ENCODE measurements at regions of chr10 and their contacts with region 1.

Region 1: GRCh38 chr10:112140110-112140970 is 43.2 kb downstream of the GPAM start:
- DNase-seq: peak; percentile 75 to 96
- H3K4me3 ChIP-seq: no peak overlapping the region
- H3K27ac ChIP-seq: no peak overlapping the region
- H3K4me1 ChIP-seq: no peaks in the 10 kb centered on the region; a peak in 2 of 7 replicates
- H3K27me3 ChIP-seq: no peaks in the 10 kb centered on the region
- CTCF ChIP-seq: peak; percentile 86 to 99 (median 97)
- EP300 ChIP-seq: no peak
- POLR2A ChIP-seq: no peak
- RAD21 ChIP-seq: peak; percentile 85 to 90

Region 2: DNA sequence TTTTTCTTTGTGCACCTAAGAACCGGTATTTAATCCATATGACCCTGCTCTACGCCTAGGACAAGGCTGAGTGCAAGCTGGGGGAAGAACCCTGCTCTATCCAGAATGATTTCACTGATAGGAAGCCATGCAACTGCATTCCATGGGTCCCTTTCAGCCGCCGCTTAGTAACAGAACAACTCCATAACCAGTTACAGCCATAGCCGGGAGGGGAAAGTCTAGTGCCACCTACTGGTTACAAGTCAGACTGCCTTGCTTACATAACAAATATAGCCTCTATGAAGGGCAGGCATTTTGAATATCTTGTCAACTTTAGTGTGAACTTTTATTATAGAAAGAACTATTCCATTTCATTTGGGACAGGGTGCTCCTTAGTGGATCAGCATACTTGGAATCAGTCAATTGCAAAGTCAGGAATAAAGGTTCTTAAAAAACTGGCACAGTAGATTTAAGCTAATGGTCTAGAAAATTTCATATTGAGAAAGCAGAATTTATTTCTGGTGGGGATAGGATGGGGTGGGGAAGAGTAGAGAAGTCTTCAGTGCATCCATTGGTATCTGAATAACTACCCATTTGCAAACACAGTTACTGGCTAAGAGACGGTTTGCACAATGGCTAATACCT is 541.8 kb before region 1 on chr10:
- CTCF ChIA-PET with region 1: interaction called, 12 read pairs
- POLR2A ChIA-PET with region 1: no interaction called
- DNase-seq: peak; percentile 39 to 68
- H3K4me3 ChIP-seq: no peak overlapping the region
- H3K27ac ChIP-seq: no peak overlapping the region
- H3K4me1 ChIP-seq: peaks cover 0 to 3% (median 0%) of the 10 kb centered on the region in 4 experiments; a peak in 1 of 7 replicates
- H3K27me3 ChIP-seq: no peaks in the 10 kb centered on the region
- CTCF ChIP-seq: peak; percentile 23 to 90 (median 71)
- EP300 ChIP-seq: no peak
- POLR2A ChIP-seq: no peak
- RAD21 ChIP-seq: peak; percentile 72 to 87

Region 3: DNA sequence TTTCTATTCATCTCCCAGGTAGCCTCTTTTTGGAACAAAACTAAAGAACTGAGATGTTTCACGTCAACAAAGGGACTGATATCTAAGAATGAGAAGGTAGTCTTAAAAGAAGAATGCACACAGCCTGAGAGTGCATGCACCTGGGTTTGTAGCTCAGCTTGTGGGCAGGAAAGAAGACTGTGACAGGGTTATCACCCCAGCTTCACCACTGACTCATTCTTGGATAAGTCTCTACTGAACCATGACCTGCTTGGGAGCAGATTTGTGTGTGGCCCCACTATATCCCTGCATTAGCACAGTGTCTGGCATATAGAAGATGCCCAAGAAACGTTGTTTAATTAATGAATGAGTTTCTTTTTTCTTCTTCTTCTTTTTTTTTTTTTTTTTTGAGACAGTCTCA is 144.2 kb before region 1 on chr10:
- CTCF ChIA-PET with region 1: interaction called, 14 read pairs
- POLR2A ChIA-PET with region 1: no interaction called
- DNase-seq: no peak
- H3K4me3 ChIP-seq: no peak overlapping the region
- H3K27ac ChIP-seq: no peak overlapping the region
- H3K4me1 ChIP-seq: peaks cover 3 to 15% (median 14%) of the 10 kb centered on the region in 4 experiments; a peak in 5 of 7 replicates
- H3K27me3 ChIP-seq: no peaks in the 10 kb centered on the region; a peak in 1 of 7 replicates
- CTCF ChIP-seq: no peak
- EP300 ChIP-seq: no peak
- POLR2A ChIP-seq: no peak
- RAD21 ChIP-seq: no peak

Region 4: DNA sequence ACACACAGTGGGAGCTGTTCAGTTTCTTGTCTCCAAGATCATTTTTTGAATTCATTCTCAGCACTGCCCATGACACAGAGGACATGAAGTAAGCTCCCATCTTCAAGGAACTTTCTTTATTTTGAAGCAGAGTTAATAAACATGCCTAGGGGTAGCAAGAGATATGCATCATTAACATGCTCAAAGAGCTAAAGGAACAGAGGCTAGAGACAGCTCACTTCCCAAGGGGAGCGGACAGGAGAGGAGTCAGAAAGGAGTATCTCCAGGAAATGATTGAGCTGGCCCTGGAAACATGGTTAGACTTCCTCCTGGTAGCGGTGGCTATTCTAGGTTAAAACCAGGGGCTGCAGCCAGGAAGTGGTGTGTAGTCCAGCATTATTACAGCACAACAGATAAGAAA is 92.7 kb before region 1 on chr10:
- CTCF ChIA-PET with region 1: interaction called, 11 read pairs
- POLR2A ChIA-PET with region 1: no interaction called
- DNase-seq: no peak
- H3K4me3 ChIP-seq: no peak overlapping the region
- H3K27ac ChIP-seq: no peak overlapping the region
- H3K4me1 ChIP-seq: no peaks in the 10 kb centered on the region
- H3K27me3 ChIP-seq: no peaks in the 10 kb centered on the region
- CTCF ChIP-seq: no peak
- EP300 ChIP-seq: no peak
- POLR2A ChIP-seq: no peak
- RAD21 ChIP-seq: no peak

Region 5: GRCh38 chr10:112077990-112078389 is 62.4 kb before region 1 on chr10:
- CTCF ChIA-PET with region 1: interaction called, 11 read pairs
- POLR2A ChIA-PET with region 1: no interaction called
- DNase-seq: no peak
- H3K4me3 ChIP-seq: no peak overlapping the region
- H3K27ac ChIP-seq: no peak overlapping the region
- H3K4me1 ChIP-seq: peaks cover 0 to 3% (median 1%) of the 10 kb centered on the region in 4 experiments; a peak in 1 of 7 replicates
- H3K27me3 ChIP-seq: peaks cover 0 to 1% (median 0%) of the 10 kb centered on the region in 4 experiments; a peak in 1 of 7 replicates
- CTCF ChIP-seq: no peak
- EP300 ChIP-seq: no peak
- POLR2A ChIP-seq: no peak
- RAD21 ChIP-seq: no peak

Region 6: GRCh38 chr10:112115799-112116385 is 24.4 kb before region 1 on chr10:
- CTCF ChIA-PET with region 1: interaction called, 286 read pairs
- POLR2A ChIA-PET with region 1: no interaction called
- DNase-seq: peak; percentile 19 to 76
- H3K4me3 ChIP-seq: no peak overlapping the region
- H3K27ac ChIP-seq: no peak overlapping the region
- H3K4me1 ChIP-seq: no peaks in the 10 kb centered on the region; a peak in 1 of 7 replicates
- H3K27me3 ChIP-seq: no peaks in the 10 kb centered on the region
- CTCF ChIP-seq: peak; percentile 79 to 94 (median 92)
- EP300 ChIP-seq: no peak
- POLR2A ChIP-seq: no peak
- RAD21 ChIP-seq: peak; percentile 68 to 75

Region 7: GRCh38 chr10:112250555-112250954 is 110.2 kb after region 1 on chr10:
- CTCF ChIA-PET with region 1: no interaction called
- POLR2A ChIA-PET with region 1: no interaction called
- DNase-seq: no peak
- H3K4me3 ChIP-seq: no peak overlapping the region
- H3K27ac ChIP-seq: no peak overlapping the region
- H3K4me1 ChIP-seq: no peaks in the 10 kb centered on the region
- H3K27me3 ChIP-seq: no peaks in the 10 kb centered on the region
- CTCF ChIP-seq: no peak
- EP300 ChIP-seq: no peak
- POLR2A ChIP-seq: no peak
- RAD21 ChIP-seq: no peak

Region 8: DNA sequence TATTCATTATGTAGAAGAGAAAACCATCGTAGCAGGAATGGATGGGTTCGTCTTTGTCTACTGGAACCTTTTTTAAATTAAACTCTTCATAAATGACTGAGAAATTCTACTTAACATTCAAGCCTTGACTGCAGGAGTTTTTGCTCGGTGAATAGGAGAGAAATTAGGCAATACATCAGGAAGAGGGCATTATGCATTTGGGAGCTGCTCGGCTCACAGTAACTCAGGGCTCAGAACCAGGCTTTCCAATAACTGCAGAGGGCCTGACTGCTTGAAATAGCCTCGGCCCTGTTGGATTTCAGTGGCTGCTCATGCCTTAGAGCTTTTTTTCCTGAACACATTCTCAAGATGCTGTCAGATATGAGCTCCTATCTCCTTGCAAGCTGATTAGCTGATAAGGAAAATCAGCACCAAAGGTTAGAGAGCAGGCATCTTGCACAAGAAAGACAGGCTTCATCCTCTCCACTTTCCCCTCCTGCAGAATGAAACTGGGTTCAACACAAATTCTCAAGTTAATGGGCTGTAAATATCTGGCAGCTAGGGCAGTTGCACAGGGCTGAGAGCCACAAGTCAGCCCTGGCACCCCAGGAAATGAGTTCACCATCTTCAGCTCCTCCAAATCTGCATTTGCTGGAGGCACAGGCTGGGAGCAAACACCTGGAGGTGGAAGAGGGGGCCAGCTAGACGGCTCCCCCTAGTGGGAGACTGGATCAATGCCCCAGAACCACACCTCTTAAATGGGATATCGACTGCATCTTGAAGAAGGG is 167.2 kb after region 1 on chr10:
- CTCF ChIA-PET with region 1: interaction called, 55 read pairs
- POLR2A ChIA-PET with region 1: no interaction called
- DNase-seq: peak; percentile 59 to 79
- H3K4me3 ChIP-seq: no peak overlapping the region
- H3K27ac ChIP-seq: no peak overlapping the region
- H3K4me1 ChIP-seq: peaks cover 0 to 3% (median under 1%) of the 10 kb centered on the region in 4 experiments; a peak in 2 of 7 replicates
- H3K27me3 ChIP-seq: no peaks in the 10 kb centered on the region
- CTCF ChIP-seq: peak; percentile 81 to 95 (median 85)
- EP300 ChIP-seq: no peak
- POLR2A ChIP-seq: no peak
- RAD21 ChIP-seq: peak; percentile 91 to 93

Measured in H1 (cell line).